H1 (cell line): ENCODE measurements at regions of chrX and their contacts with region 1.

Region 1: GRCh38 chrX:41333744-41334259 is at the start of gene DDX3X:
- DNase-seq: peak in 1 of 2 experiments; percentile 79
- H3K4me3 ChIP-seq: peak within 1 kb of the TSS; percentile 66 to 99 (median 92)
- H3K27ac ChIP-seq: peak within 1 kb of the TSS; percentile 99
- H3K4me1 ChIP-seq: peaks cover 0 to 11% (median 5%) of the 10 kb centered on the region in 4 experiments; a peak in 4 of 7 replicates
- H3K27me3 ChIP-seq: no peaks in the 10 kb centered on the region
- CTCF ChIP-seq: peak in 1 of 3 experiments; percentile 6; a peak in 1 of 4 replicates
- EP300 ChIP-seq: no peak
- POLR2A ChIP-seq: peak; percentile 97 to 100
- RAD21 ChIP-seq: no peak
- total RNA-seq, gene DDX3X: 274 and 291 TPM in 2 replicates

Region 2: GRCh38 chrX:41224606-41225005 is 109.2 kb before region 1 on chrX:
- CTCF ChIA-PET with region 1: no interaction called
- POLR2A ChIA-PET with region 1: no interaction called
- DNase-seq: no peak
- H3K4me3 ChIP-seq: no peak overlapping the region
- H3K27ac ChIP-seq: no peak overlapping the region
- H3K4me1 ChIP-seq: no peaks in the 10 kb centered on the region
- H3K27me3 ChIP-seq: no peaks in the 10 kb centered on the region
- CTCF ChIP-seq: no peak
- EP300 ChIP-seq: no peak
- POLR2A ChIP-seq: no peak
- RAD21 ChIP-seq: no peak

Region 3: DNA sequence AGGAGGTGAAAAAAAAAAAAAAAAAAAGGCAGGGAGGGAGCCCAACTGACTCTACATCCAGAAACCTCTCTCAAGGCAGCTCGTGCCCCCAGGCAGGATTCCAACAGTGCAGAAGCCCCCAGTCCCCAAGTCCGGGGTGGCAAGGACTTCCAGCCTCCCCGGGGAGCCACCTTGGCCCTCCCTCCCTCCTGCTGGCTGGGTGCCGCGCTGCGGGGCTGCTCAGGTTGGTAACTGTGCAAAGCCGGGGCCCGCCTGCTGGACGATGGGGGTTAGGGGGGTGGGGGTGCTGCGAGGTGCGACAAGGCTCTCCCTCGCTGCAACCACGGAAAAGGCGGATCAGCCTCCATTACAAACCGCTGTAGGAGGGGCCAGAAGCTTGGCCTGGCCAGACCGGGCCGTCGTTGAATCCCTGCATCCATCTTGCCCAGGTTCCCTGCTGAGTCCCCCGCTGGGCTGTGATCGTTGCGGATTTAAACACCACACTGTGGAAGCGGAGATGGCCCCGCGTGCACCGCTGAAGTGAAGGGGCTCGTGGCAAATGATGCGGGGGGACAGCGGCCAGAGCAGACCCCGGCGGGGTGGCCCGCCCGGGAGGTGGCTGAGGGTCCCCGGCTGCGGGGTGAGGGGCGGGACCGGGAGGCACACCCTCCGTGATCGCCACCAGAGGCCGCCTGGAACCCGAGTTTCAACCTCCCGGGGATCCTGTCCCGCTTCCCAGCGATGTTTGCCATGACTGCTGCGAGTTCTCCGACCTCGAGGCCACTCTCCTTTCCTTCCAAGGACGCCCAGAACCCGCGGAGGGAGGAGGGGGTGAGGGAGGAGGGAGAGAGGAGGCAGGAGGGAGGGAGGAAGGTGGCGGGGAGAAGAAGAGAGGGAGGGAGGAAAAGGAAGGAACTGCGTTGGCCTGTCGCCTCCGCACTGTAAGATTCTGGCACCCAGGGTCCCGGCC is 57.9 kb before region 1 on chrX:
- CTCF ChIA-PET with region 1: no interaction called
- POLR2A ChIA-PET with region 1: interaction called, 11 read pairs
- DNase-seq: peak in 1 of 2 experiments; percentile 62
- H3K4me3 ChIP-seq: peak overlapping the region; percentile 23 to 66 (median 43)
- H3K27ac ChIP-seq: no peak overlapping the region; the same call in 1 of the 2 replicates
- H3K4me1 ChIP-seq: peaks cover 0 to 3% (median 0%) of the 10 kb centered on the region in 4 experiments; a peak in 2 of 7 replicates
- H3K27me3 ChIP-seq: no peaks in the 10 kb centered on the region
- CTCF ChIP-seq: peak in 2 of 3 experiments; percentile 20 to 22; a peak in 2 of 4 replicates
- EP300 ChIP-seq: no peak
- POLR2A ChIP-seq: peak; percentile 16 to 44
- RAD21 ChIP-seq: peak; percentile 38 to 49

Region 4: DNA sequence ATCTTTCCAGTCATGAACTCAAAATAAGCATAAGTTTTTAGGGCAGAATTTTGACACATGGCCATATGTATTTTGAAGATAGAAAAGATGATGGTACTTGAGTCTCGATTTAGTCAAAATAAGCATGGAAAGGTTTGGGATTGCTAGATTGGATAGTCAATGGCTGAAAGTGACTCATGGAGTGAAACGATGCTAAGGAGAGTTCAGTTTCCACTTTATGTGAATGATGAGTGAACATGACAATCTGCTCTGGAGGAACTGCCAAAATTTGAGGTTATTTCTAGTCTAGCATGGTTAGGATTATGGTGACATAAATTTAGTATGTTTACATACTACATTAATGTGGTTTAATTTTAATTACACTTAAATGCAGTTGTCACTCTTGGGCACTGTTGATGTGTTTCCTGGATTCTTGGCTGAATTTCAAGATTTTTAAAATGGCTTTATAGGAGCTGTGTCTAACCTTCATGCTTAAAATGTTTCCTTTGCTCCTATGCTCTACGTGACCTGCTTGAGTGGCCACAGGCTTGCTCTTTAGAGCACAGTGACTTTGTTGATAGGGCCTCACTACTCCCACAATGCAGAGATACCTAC is 17.3 kb after region 1 on chrX:
- CTCF ChIA-PET with region 1: no interaction called
- POLR2A ChIA-PET with region 1: interaction called, 33 read pairs
- DNase-seq: no peak
- H3K4me3 ChIP-seq: no peak overlapping the region
- H3K27ac ChIP-seq: no peak overlapping the region
- H3K4me1 ChIP-seq: peaks cover 0 to 3% (median 0%) of the 10 kb centered on the region in 4 experiments; a peak in 2 of 7 replicates
- H3K27me3 ChIP-seq: no peaks in the 10 kb centered on the region
- CTCF ChIP-seq: no peak
- EP300 ChIP-seq: no peak
- POLR2A ChIP-seq: peak; percentile 39 to 80
- RAD21 ChIP-seq: no peak